Activated naive CD8-positive, alpha-beta T cell treated with anti-CD3 and anti-CD28 coated beads, Interleukin-2, amount 10 ng/mL, durations not matched to agents 7 days and 5 days (primary cell): ENCODE measurements at regions of chr1 and their contacts with region 1.

Region 1: DNA sequence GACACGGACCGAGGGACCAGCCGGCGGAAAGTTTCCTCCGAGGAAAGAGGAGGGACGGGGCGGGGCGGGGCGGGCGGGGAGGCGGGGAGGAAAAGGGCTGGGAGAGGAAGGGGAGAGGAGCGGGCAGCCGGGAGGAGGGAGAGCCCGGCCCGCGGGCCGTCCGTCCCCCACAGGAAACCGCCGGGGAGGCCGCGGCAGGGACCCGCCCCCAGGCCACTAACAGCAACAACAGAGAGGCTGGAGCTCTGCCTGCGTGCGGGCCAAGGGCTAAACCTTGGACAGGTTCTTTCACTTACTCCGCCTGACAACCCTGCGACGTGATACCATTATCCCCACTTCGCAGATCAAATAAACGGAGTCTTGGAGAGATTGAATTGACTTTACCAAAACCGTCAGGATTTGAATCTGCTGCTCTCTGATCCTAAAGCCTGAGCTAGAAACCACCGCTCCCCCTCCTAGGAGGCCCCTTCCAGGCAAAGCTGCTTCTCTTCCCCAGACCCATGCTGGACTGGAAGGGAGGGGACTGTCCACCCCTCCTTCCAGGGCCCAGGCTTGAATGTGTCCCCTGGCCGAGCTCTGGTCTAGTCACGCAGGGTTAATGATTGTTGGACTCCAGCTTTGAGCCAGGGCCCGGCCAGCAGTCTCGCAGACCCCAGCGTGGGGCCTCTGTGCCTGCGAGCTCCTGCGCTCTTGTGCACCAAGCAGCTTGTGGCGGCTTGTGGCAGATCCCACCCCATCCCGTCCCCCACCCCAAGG is at the start of gene EVA1B:
- DNase-seq: peak; percentile 72
- ATAC-seq: peak; percentile 46
- H3K4me3 Mint-ChIP-seq: peak within 1 kb of the TSS; percentile 83
- H3K27ac Mint-ChIP-seq: peak within 1 kb of the TSS; percentile 38
- H3K4me1 Mint-ChIP-seq: peaks cover 38% of the 10 kb centered on the region
- H3K27me3 Mint-ChIP-seq: peaks cover 2% of the 10 kb centered on the region
- total RNA-seq, gene EVA1B: 11.6 to 14.1 TPM

Region 2: DNA sequence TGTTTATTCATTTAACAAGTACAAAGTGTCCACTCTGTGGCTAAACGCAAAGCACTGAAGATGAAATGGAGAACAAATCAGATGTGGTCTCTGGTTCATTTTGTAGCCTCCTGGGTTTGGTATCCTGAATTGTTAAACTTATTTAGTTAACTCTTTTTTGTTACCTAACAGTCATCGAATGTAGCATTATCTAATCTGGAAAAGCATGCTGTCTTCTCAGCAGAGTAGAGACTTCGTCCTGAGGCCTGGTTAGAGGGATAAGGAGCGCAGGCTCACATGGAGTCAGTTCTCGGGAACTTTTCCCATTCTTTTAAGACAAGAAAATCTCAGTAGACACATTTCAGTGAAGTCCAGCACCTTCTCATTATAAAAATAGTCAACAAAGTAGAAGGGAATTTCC is 50.8 kb before region 1 on chr1:
- POLR2A ChIA-PET with region 1: no interaction called
- DNase-seq: no peak
- ATAC-seq: no peak
- H3K4me3 Mint-ChIP-seq: no peak overlapping the region
- H3K27ac Mint-ChIP-seq: no peak overlapping the region
- H3K4me1 Mint-ChIP-seq: peaks cover 10% of the 10 kb centered on the region
- H3K27me3 Mint-ChIP-seq: no peaks in the 10 kb centered on the region

Region 3: DNA sequence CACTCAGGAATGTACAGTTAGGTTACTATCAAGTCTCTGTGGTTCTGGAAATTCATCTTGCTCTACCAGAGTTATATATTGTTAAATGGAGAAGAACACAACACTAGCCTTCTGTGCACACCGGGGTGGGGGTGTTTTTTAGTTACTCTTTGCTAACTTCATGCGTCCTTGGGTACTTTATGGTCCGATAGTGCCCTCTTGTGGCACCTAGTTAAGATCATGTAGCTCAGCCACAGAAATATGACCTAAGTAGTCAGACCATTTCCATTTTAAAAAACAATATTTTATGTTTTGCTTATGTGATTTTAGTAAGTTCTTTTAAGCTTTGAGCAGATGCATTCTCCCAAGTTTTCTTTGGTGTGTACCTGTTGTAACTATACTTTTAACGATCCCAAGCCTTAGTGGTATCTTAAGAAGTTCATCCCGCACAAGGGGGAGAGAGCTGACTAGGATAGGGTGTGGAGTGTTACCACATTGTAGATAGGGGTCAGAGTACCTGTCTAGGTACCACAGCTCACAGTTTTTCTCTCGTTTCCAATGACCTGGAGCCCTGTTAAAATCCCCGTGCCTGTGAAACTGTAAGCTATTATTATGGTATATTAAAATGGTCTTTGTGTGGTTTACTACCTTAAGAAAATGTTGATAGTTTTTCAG is 38.2 kb before region 1 on chr1:
- POLR2A ChIA-PET with region 1: no interaction called
- DNase-seq: no peak
- ATAC-seq: peak; percentile 89
- H3K4me3 Mint-ChIP-seq: no peak overlapping the region
- H3K27ac Mint-ChIP-seq: no peak overlapping the region
- H3K4me1 Mint-ChIP-seq: peaks cover 19% of the 10 kb centered on the region
- H3K27me3 Mint-ChIP-seq: no peaks in the 10 kb centered on the region

Region 4: DNA sequence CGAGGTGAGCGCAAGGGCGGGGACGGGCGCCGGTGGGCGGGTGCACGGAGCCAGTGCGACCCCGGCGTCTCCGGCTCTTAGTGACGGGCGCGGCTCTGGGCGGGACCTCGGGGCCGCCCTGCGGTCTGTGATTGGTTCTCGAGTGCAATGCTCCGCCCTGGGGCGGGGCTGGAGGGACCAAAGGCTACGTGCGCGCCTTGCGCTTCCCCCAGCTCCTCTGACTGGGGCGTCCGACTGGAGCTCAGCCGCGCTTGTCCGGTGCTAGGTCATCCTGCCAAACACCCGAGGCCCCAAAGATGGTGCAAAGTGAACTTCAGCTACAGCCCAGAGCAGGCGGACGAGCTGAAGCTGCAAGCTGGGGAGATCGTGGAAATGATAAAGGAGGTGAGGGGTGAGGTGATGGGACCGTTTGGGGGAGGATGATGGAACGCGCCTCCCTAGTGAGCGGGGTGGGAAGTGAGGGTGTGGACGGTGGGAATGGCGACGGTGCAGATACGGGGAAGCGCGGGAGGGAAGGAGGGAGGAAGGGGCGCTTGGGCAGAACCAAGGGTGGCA is 16.8 kb before region 1 on chr1:
- POLR2A ChIA-PET with region 1: interaction called, 24 read pairs
- DNase-seq: peak; percentile 98
- ATAC-seq: peak; percentile 97
- H3K4me3 Mint-ChIP-seq: peak overlapping the region; percentile 99
- H3K27ac Mint-ChIP-seq: peak overlapping the region; percentile 91
- H3K4me1 Mint-ChIP-seq: peaks cover 25% of the 10 kb centered on the region
- H3K27me3 Mint-ChIP-seq: no peaks in the 10 kb centered on the region

Region 5: DNA sequence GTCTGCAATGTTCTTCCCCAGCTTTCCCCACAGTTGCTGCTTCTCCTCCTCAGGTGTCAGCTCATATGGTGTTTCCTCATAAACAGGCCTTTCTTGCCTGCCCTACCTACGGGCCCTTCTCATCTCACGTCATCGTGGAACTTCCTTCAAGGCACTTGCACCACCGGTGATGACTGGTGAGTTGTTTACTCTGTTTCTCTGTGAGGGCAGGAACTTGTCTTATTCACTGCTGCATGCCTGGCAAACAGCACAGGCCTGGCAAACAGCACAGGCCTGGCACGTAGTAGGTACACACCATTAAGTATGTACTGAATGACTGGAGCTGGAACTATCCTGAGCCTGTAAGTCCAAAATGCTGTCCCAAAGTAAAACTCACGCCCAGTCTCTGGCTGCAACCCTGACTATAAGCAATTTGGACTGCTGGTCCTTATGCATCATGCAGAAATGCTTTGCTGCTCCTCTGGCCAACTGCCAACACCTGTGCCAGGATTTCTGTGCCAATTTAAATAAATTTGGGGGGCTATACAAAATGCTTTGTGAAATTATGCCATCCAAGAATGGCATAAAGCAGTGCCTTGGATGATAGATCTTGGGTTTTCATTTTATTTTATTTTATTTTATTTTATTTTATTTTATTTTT is 36.3 kb after region 1 on chr1:
- POLR2A ChIA-PET with region 1: no interaction called
- DNase-seq: no peak
- ATAC-seq: no peak
- H3K4me3 Mint-ChIP-seq: no peak overlapping the region
- H3K27ac Mint-ChIP-seq: peak overlapping the region; percentile 84
- H3K4me1 Mint-ChIP-seq: peaks cover 13% of the 10 kb centered on the region
- H3K27me3 Mint-ChIP-seq: no peaks in the 10 kb centered on the region